Upper lobe of right lung (tissue), 1 donor: ENCODE measurements at regions of chr13 and their contacts with region 1.

Region 1: GRCh38 chr13:44435142-44435982 is 61.7 kb downstream of the SERP2 start:
- DNase-seq: peak; percentile 96
- ATAC-seq: peak; percentile 88
- H3K4me3 ChIP-seq: peak overlapping the region; percentile 87
- H3K27ac ChIP-seq: peak overlapping the region; percentile 96
- H3K4me1 ChIP-seq: peaks cover 26% of the 10 kb centered on the region
- H3K27me3 ChIP-seq: no peaks in the 10 kb centered on the region
- CTCF ChIP-seq: no peak

Region 2: DNA sequence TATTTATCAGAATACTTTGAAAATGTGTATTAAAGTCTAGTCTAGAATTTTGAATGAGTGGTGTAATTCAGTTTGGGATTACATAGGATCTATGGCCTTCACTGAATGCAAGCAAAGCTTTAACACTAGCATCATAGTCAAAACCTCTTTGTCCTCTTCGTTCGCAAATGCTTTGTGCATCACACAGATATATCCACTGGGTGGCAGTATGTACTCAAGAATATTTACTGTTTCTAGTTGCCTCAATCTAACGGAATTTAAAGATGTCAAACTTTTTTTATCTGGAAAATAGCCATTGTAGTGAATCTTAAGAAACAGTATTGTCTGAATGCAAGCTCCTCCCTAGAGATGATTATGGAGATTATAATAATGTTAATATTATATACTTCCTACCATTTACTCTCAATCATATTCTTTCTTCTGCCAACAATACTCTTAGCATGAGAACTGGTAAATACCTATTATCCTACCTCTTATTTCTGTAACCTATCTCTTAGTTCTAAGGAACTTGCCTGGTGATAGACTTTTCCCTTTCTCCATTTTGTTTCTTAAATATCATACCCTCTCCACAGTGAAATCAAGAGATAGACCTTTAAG is 529.8 kb before region 1 on chr13:
- intact Hi-C with region 1: loop called (anchors 10 kb)
- DNase-seq: no peak
- ATAC-seq: peak; percentile 89
- H3K4me3 ChIP-seq: no peak overlapping the region
- H3K27ac ChIP-seq: no peak overlapping the region
- H3K4me1 ChIP-seq: no peaks in the 10 kb centered on the region
- H3K27me3 ChIP-seq: no peaks in the 10 kb centered on the region
- CTCF ChIP-seq: peak; percentile 86

Region 3: GRCh38 chr13:44048323-44048722 is 387.0 kb before region 1 on chr13:
- intact Hi-C with region 1: loop called (anchors 5 kb)
- DNase-seq: no peak
- ATAC-seq: no peak
- H3K4me3 ChIP-seq: no peak overlapping the region
- H3K27ac ChIP-seq: no peak overlapping the region
- H3K4me1 ChIP-seq: peaks cover 10% of the 10 kb centered on the region
- H3K27me3 ChIP-seq: no peaks in the 10 kb centered on the region
- CTCF ChIP-seq: peak; percentile 7

Region 4: DNA sequence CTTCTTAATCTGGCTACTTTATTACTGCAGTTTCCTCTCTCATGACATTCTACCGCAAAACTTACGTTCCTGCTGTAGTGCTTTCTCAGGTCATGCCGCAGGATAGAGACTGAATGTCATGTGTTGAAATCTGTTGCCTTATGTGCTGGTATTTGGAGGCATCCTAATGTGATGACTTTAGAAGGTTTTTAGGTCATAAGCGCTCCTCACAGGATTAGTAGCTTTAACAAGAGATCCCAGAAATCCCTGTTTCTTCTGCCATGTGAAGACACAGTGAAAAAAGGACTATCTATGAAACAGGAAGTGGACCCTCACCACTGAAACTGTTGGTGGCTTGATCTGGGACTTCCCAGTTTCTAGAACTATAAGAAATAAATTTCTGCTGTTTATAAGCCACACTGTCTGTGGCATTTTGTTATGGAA is 346.4 kb before region 1 on chr13:
- intact Hi-C with region 1: no loop called
- DNase-seq: no peak
- ATAC-seq: no peak
- H3K4me3 ChIP-seq: no peak overlapping the region
- H3K27ac ChIP-seq: no peak overlapping the region
- H3K4me1 ChIP-seq: no peaks in the 10 kb centered on the region
- H3K27me3 ChIP-seq: no peaks in the 10 kb centered on the region
- CTCF ChIP-seq: no peak

Region 5: DNA sequence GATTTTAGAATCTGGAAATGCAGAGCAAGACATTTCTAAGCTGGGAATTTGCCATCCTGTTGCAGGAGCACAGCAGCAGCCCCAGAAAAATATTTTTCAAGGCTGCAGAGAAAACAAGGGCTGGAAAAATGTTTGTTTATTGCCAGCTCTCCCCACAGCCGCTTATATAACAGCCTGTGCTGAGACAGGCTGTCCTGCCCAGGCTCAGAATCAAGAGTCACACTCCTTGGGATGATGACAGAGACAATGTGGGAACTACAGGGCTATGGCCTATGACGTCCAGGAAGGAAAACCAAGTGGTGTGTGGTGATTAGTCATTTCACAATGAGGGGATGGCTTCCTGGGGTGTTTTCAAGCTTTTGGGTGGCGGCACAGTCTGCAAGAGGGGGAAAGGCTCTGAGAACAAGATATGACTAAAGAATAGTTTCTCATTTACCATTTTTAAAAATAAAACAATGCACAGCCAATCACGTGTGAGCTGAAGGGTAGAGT is 198.0 kb before region 1 on chr13:
- intact Hi-C with region 1: loop called (anchors 10 kb)
- DNase-seq: no peak
- ATAC-seq: peak; percentile 93
- H3K4me3 ChIP-seq: no peak overlapping the region
- H3K27ac ChIP-seq: peak overlapping the region; percentile 77
- H3K4me1 ChIP-seq: peaks cover 32% of the 10 kb centered on the region
- H3K27me3 ChIP-seq: no peaks in the 10 kb centered on the region
- CTCF ChIP-seq: no peak